ENCODE measurements at regions of chr10 and their contacts with region 1.

Region 1: GRCh38 chr10:96513698-96514561 is at the start of gene TLL2:
- DNase-seq: peak; percentile 77
- H3K4me3 Mint-ChIP-seq: peak within 1 kb of the TSS; percentile 57
- H3K27ac Mint-ChIP-seq: no peak within 1 kb of the TSS
- H3K4me1 Mint-ChIP-seq: peaks cover 20% of the 10 kb centered on the region
- H3K27me3 Mint-ChIP-seq: peaks cover 25% of the 10 kb centered on the region
- total RNA-seq, gene TLL2: 0.05 TPM in 1 of 2 experiments, not detected in the other

Region 2: DNA sequence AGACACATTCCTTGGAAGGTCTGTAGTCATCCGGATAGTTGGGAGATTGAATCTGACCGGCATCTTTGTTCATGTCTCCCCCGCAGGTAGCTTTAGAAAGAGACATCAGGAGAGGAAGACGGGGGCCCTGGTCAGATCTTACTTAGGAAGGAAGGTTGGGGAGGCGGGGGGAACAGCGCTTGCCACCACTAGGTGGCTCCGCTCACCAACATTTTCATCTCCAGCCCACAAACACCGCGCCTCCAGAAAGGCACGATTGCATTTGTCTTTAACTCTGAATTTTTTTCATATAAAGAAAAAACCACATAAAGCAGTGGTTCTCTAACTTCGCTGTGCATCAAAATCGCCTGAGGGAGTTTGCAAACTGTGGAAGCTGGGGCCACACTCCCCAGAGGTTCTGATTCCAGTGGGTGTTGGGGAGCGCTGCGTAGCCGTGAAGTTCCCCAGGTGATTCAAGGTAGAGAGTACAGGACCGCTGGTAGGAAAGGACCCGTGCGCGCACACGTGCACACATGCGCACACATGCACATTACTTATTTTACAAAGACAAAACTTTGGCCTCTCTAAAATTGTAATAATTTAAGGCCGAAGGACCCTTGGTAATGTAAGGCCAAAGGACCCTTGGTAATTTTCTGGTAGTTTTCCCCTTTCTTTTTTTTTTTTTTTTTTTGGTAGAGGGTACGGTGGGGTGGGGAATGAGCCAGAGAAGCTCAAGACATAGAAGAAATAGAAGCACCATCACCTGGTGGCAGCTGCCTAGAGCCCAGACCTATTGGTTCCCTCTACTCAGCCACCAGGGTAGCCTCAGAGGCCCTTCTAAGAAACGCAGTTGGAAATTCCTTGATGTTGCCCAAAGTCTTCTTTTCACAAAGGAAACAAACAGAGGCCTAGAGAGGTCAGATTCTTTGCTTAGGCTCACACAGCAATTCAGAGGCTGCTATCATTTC is 117.7 kb before region 1 on chr10:
- CTCF ChIA-PET with region 1: interaction called, 17 read pairs
- POLR2A ChIA-PET with region 1: no interaction called
- intact Hi-C with region 1: loop called (anchors 1 kb)
- DNase-seq: peak; percentile 74
- H3K4me3 Mint-ChIP-seq: no peak overlapping the region
- H3K27ac Mint-ChIP-seq: no peak overlapping the region
- H3K4me1 Mint-ChIP-seq: peaks cover 6% of the 10 kb centered on the region
- H3K27me3 Mint-ChIP-seq: peaks cover 17% of the 10 kb centered on the region

Region 3: GRCh38 chr10:96478317-96478716 is 35.6 kb before region 1 on chr10:
- CTCF ChIA-PET with region 1: no interaction called
- POLR2A ChIA-PET with region 1: no interaction called
- intact Hi-C with region 1: no loop called
- DNase-seq: no peak
- H3K4me3 Mint-ChIP-seq: no peak overlapping the region
- H3K27ac Mint-ChIP-seq: no peak overlapping the region
- H3K4me1 Mint-ChIP-seq: no peaks in the 10 kb centered on the region
- H3K27me3 Mint-ChIP-seq: peaks cover 14% of the 10 kb centered on the region

Region 4: GRCh38 chr10:96719850-96720421 is 206.0 kb after region 1 on chr10:
- CTCF ChIA-PET with region 1: no interaction called
- POLR2A ChIA-PET with region 1: no interaction called
- intact Hi-C with region 1: loop called (anchors 5 kb)
- DNase-seq: peak; percentile 69
- H3K4me3 Mint-ChIP-seq: peak overlapping the region; percentile 89
- H3K27ac Mint-ChIP-seq: no peak overlapping the region
- H3K4me1 Mint-ChIP-seq: peaks cover 12% of the 10 kb centered on the region
- H3K27me3 Mint-ChIP-seq: peaks cover 1% of the 10 kb centered on the region